Dendritic cell treated with granulocyte-macrophage colony-stimulating factor and Interleukin-4, amounts not matched to agents 40 ng/mL and 50 ng/mL, for 4 days (primary cell): ENCODE measurements at regions of chr12 and their contacts with region 1.

Region 1: GRCh38 chr12:64392221-64392620 is 1.7 kb upstream of the C12orf56 start:
- H3K4me3 Mint-ChIP-seq: no peak overlapping the region
- H3K27ac Mint-ChIP-seq: no peak overlapping the region
- H3K4me1 Mint-ChIP-seq: peaks cover 5% of the 10 kb centered on the region
- H3K27me3 Mint-ChIP-seq: peaks cover 34% of the 10 kb centered on the region

Region 2: DNA sequence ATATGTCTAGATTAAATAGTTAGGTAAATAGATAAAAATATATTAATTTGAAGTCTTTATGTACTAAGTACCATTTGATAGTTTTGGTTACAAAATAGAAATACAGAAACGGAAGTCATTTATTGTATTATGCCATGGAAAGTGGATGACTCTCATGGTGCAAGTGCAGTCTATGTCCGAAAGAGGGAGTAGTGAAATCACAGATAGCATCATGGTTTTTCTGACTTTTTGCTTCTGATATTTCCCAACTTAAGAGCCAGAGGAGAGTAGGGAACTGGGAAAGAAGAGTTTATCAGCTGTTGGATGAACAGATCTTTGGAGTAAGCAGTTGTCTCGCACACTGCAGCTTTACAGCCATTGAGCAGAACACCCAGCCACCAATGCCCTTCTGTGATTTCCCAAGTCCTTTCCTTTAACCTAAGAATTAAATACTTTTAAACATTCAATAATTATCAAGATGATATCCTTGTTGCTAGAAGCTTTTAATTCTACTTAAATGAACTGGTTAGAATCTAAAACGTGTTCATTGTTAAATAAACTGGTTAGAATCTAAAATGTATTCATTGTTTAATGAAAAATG is 566.1 kb before region 1 on chr12:
- intact Hi-C with region 1: loop called (anchors 5 kb)
- H3K4me3 Mint-ChIP-seq: no peak overlapping the region
- H3K27ac Mint-ChIP-seq: no peak overlapping the region
- H3K4me1 Mint-ChIP-seq: peaks cover 5% of the 10 kb centered on the region
- H3K27me3 Mint-ChIP-seq: peaks cover 9% of the 10 kb centered on the region

Region 3: GRCh38 chr12:64181504-64182291 is 210.5 kb before region 1 on chr12:
- intact Hi-C with region 1: no loop called
- H3K4me3 Mint-ChIP-seq: no peak overlapping the region
- H3K27ac Mint-ChIP-seq: no peak overlapping the region
- H3K4me1 Mint-ChIP-seq: peaks cover 25% of the 10 kb centered on the region
- H3K27me3 Mint-ChIP-seq: peaks cover 4% of the 10 kb centered on the region

Region 4: DNA sequence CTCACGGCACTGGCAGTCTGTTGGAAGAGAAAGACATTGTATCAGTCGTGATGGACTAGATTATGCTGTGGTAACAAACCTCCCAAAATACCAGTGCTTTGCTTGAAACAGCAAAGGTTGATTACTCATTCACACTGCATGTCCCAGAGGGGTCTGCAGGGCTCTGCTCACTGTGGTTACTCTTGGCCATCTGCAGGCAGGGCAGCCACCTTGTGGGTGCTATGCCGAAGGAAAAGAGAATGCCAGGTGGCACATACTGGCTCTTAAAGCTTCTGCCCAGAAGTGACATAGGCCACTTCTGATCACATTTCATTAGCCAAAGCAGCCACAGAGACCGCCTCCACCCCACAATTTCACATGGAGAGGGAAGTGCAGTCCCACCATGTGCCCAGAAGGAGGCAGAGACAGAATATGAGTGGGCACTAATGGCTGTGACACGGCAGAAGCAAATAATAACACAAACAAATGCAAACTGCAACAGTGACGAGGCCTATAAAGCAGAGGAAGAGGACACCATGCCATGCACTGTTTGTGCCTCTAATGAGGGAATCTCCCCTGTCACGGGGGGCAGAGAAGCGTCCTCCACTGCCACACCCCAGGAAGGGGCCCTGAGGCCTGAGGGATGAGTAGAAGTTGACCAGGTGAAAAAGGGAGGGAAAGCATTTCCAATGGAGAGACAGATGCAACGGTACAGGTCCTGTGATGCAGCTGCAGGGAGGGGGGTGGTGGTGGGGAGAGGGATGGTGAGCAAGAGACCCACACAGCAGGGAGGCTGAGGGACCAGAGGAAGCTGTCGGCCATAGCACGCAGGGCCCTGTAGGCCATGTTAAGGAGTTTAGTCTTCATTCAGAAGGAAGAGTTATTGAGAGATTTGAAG is 118.5 kb before region 1 on chr12:
- intact Hi-C with region 1: loop called (anchors 1 kb)
- H3K4me3 Mint-ChIP-seq: no peak overlapping the region
- H3K27ac Mint-ChIP-seq: no peak overlapping the region
- H3K4me1 Mint-ChIP-seq: no peaks in the 10 kb centered on the region
- H3K27me3 Mint-ChIP-seq: peaks cover 1% of the 10 kb centered on the region

Region 5: GRCh38 chr12:64311877-64312276 is 80.3 kb before region 1 on chr12:
- intact Hi-C with region 1: no loop called
- H3K4me3 Mint-ChIP-seq: no peak overlapping the region
- H3K27ac Mint-ChIP-seq: no peak overlapping the region
- H3K4me1 Mint-ChIP-seq: no peaks in the 10 kb centered on the region
- H3K27me3 Mint-ChIP-seq: no peaks in the 10 kb centered on the region

Region 6: GRCh38 chr12:64347630-64348029 is 44.6 kb before region 1 on chr12:
- intact Hi-C with region 1: no loop called
- H3K4me3 Mint-ChIP-seq: no peak overlapping the region
- H3K27ac Mint-ChIP-seq: no peak overlapping the region
- H3K4me1 Mint-ChIP-seq: no peaks in the 10 kb centered on the region
- H3K27me3 Mint-ChIP-seq: no peaks in the 10 kb centered on the region

Region 7: DNA sequence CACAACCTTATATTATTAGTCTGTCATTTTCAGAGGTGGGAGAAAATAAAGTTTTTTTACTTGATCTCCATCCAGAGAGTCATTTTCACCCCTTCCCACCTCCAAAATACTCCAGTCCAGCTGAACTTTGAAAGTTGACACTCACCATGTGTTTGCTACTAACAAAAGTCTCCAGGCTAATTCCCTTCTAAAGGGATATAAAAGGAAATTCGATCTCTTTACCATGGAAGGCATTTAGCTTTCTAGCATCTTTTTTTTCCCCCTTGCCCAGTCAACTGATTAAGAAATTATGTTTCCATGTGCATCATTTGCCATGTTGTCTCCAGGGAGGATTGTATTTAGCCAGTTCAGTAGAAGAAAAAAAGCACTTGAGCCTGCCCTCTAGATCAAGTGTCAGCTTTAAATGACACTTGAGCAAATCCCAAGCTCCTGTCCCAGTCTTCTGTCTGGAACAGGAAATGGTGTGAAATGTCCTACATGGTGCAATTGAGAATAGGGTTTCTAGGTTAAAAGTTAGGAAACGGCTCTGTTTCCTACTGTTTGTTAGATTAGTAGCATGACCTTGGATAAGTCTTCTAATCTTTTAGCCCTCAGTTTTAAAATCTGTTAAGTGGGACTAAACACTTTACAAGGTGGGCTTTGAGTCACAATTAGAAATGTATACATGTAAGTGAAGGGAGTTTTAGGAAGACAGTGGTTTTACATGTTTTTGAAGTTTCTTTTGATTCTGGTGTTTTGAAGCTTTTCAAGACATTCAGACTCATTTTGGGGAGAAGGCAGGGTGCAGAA is 299.8 kb after region 1 on chr12:
- intact Hi-C with region 1: no loop called
- H3K4me3 Mint-ChIP-seq: no peak overlapping the region
- H3K27ac Mint-ChIP-seq: peak overlapping the region; percentile 38
- H3K4me1 Mint-ChIP-seq: peaks cover 32% of the 10 kb centered on the region
- H3K27me3 Mint-ChIP-seq: no peaks in the 10 kb centered on the region